Dendritic cell treated with granulocyte-macrophage colony-stimulating factor and Interleukin-4, amounts not matched to agents 40 ng/mL and 50 ng/mL, for 4 days (primary cell): ENCODE measurements at regions of chr5 and their contacts with region 1.

Region 1: DNA sequence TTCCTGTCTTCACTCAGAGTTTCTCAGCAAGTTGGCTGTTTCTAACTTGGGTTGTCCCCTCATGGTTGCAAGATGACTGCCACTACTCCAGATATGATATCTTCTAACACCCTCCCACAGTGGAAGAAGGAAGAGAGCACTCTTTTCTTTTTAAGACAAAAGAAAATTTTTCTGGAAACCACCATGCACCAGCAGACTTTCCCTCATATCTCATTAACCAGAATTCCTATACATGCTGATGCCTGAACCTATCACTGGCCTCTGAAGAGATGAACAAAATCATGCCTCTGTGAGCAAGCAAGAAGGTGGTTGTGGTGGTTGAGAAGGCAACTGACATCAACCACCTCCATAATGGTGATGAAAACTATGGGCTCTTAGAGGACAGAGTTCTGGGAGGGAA is 56.8 kb downstream of the FEM1C start:
- H3K4me3 Mint-ChIP-seq: no peak overlapping the region
- H3K27ac Mint-ChIP-seq: peak overlapping the region; percentile 46
- H3K4me1 Mint-ChIP-seq: peaks cover 55% of the 10 kb centered on the region
- H3K27me3 Mint-ChIP-seq: no peaks in the 10 kb centered on the region

Region 2: DNA sequence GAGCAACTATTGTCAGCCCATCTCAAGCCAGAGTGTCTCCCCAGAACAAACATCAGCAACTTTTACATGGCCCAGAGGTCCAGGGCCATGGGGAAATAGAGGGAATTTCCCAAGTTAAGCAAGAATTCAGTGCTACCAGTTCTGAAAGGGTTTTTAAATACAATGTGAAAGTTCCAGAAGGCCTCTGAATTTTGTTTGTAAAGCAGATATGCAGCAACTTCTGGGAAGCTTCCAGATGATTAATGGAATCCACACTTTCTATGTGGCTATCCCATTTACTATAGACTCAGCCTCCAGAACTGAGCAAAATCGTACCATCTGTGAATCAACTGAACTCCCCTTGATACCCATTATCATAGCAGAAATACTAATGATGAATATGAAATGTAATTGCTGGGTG is 37.0 kb before region 1 on chr5:
- intact Hi-C with region 1: loop called (anchors 5 kb)
- H3K4me3 Mint-ChIP-seq: no peak overlapping the region
- H3K27ac Mint-ChIP-seq: peak overlapping the region; percentile 93
- H3K4me1 Mint-ChIP-seq: peaks cover 45% of the 10 kb centered on the region
- H3K27me3 Mint-ChIP-seq: peaks cover 4% of the 10 kb centered on the region

Region 3: GRCh38 chr5:115709585-115709984 is 221.8 kb after region 1 on chr5:
- intact Hi-C with region 1: no loop called
- H3K4me3 Mint-ChIP-seq: no peak overlapping the region
- H3K27ac Mint-ChIP-seq: no peak overlapping the region
- H3K4me1 Mint-ChIP-seq: no peaks in the 10 kb centered on the region
- H3K27me3 Mint-ChIP-seq: no peaks in the 10 kb centered on the region